Activated CD4-positive, alpha-beta T cell treated with anti-CD3 and anti-CD28 coated beads for 36 hours (primary cell): ENCODE measurements at regions of chr6 and their contacts with region 1.

Region 1: DNA sequence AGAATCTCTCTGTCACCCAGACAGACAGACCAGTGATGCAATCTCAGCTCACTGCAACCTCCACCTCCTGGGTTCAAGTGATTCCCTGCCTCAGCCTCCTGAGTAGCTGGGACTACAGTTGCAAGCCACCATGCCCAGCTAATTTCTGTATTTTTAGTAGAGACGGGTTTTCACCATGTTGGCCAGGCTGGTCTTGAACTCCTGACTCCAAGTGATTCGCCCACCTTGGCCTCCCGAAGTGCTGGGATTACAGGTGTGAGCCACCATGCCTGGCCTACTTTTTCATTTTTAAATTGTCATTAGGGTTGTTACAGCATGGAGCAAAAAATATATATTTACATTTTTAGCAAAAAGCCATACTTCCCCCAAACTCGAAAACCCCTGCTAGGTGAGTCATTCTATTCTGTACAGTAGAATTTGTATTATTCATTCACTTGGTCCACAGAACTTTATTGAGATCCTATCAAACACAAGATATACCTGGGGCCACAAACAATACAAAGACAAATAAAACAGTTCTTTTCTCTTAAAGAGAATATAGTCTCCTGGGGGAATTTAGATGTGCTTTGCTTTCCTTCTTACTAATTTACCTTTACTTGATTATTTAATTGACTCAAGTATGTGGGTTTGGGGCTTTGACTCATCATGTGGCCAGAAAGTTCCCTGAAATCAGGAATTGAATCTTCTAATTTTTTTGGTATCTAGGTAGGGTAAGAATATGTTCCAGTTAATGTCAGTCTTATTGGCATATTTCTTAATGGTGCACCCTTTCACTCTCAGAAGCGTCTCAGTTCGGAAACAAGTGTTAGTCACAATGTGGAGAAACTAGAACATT is 16.6 kb upstream of the CCND3 start:
- DNase-seq: peak; percentile 71
- ATAC-seq: peak; percentile 87
- H3K4me3 Mint-ChIP-seq: peak overlapping the region; percentile 32
- H3K27ac Mint-ChIP-seq: peak overlapping the region; percentile 97
- H3K4me1 Mint-ChIP-seq: peaks cover 83% of the 10 kb centered on the region
- H3K27me3 Mint-ChIP-seq: no peaks in the 10 kb centered on the region

Region 2: DNA sequence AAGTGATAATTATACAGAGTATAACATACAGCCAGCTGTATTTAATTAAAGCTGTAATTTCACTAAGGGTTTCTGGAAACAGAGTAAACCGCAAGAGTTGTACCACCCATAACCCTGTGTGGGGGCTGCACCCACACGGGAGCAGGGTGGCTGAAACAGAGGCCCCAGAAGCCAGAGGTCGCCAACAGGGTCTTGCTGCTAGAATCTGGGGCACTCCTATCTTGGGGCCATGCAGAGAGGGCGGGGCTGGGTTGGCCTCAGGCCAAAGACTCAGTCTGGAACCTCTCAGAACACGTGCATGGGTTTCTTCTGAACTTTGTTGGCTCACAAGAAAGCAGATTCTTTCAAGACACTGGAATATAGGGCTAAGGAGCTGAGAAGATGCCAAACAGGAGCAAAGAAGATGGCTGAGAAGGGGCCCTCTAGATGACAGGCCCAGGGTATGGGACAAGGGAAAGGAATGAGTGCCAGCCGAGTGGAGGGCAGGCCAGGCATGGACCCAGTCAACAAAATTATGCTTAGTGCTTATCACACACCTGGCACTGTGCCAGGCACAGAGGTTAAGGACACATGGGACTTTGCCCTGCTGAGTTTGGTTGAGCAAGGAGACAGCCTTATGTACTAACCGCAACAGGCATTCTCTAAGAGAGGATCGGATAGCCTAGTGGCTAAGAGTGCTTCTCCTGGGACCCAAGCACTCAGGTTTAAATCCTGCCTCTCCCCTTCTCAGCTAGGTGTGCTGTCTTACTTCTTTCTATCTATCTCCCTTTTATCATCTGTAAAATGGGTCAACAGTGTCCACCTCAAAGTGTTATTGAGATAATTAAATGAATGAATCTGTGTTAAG is 508.6 kb before region 1 on chr6:
- CTCF ChIA-PET with region 1: no interaction called
- POLR2A ChIA-PET with region 1: no interaction called
- intact Hi-C with region 1: no loop called
- DNase-seq: no peak
- ATAC-seq: no peak
- H3K4me3 Mint-ChIP-seq: no peak overlapping the region
- H3K27ac Mint-ChIP-seq: no peak overlapping the region
- H3K4me1 Mint-ChIP-seq: no peaks in the 10 kb centered on the region
- H3K27me3 Mint-ChIP-seq: no peaks in the 10 kb centered on the region

Region 3: GRCh38 chr6:41941280-41942066 is 16.8 kb before region 1 on chr6 and contains the start of gene CCND3:
- CTCF ChIA-PET with region 1: interaction called, 6 read pairs
- POLR2A ChIA-PET with region 1: interaction called, 4 read pairs
- intact Hi-C with region 1: loop called (anchors 1 kb)
- DNase-seq: peak; percentile 96
- ATAC-seq: peak; percentile 79
- H3K4me3 Mint-ChIP-seq: peak within 1 kb of the TSS; percentile 100
- H3K27ac Mint-ChIP-seq: peak within 1 kb of the TSS; percentile 96
- H3K4me1 Mint-ChIP-seq: peaks cover 63% of the 10 kb centered on the region
- H3K27me3 Mint-ChIP-seq: no peaks in the 10 kb centered on the region
- total RNA-seq, gene CCND3: 625 to 806 TPM

Region 4: GRCh38 chr6:41970436-41970846 is 12.2 kb after region 1 on chr6:
- CTCF ChIA-PET with region 1: interaction called, 3 read pairs
- POLR2A ChIA-PET with region 1: interaction called, 6 read pairs
- intact Hi-C with region 1: loop called (anchors 1 kb)
- DNase-seq: peak; percentile 84
- ATAC-seq: peak; percentile 85
- H3K4me3 Mint-ChIP-seq: peak overlapping the region; percentile 45
- H3K27ac Mint-ChIP-seq: peak overlapping the region; percentile 93
- H3K4me1 Mint-ChIP-seq: peaks cover 89% of the 10 kb centered on the region
- H3K27me3 Mint-ChIP-seq: no peaks in the 10 kb centered on the region

Region 5: GRCh38 chr6:41976794-41977484 is 18.7 kb after region 1 on chr6:
- CTCF ChIA-PET with region 1: interaction called, 11 read pairs
- POLR2A ChIA-PET with region 1: interaction called, 6 read pairs
- intact Hi-C with region 1: loop called in 1 of 2 experiments (anchors 2 kb)
- DNase-seq: peak; percentile 66
- ATAC-seq: peak; percentile 94
- H3K4me3 Mint-ChIP-seq: peak overlapping the region; percentile 71
- H3K27ac Mint-ChIP-seq: peak overlapping the region; percentile 99
- H3K4me1 Mint-ChIP-seq: peaks cover 78% of the 10 kb centered on the region
- H3K27me3 Mint-ChIP-seq: no peaks in the 10 kb centered on the region

Region 6: GRCh38 chr6:42017021-42017643 is 58.9 kb after region 1 on chr6:
- CTCF ChIA-PET with region 1: interaction called, 3 read pairs
- POLR2A ChIA-PET with region 1: no interaction called
- intact Hi-C with region 1: loop called (anchors 1 kb)
- DNase-seq: peak; percentile 72
- ATAC-seq: peak; percentile 68
- H3K4me3 Mint-ChIP-seq: peak overlapping the region; percentile 49
- H3K27ac Mint-ChIP-seq: peak overlapping the region; percentile 96
- H3K4me1 Mint-ChIP-seq: peaks cover 72% of the 10 kb centered on the region
- H3K27me3 Mint-ChIP-seq: no peaks in the 10 kb centered on the region

Region 7: DNA sequence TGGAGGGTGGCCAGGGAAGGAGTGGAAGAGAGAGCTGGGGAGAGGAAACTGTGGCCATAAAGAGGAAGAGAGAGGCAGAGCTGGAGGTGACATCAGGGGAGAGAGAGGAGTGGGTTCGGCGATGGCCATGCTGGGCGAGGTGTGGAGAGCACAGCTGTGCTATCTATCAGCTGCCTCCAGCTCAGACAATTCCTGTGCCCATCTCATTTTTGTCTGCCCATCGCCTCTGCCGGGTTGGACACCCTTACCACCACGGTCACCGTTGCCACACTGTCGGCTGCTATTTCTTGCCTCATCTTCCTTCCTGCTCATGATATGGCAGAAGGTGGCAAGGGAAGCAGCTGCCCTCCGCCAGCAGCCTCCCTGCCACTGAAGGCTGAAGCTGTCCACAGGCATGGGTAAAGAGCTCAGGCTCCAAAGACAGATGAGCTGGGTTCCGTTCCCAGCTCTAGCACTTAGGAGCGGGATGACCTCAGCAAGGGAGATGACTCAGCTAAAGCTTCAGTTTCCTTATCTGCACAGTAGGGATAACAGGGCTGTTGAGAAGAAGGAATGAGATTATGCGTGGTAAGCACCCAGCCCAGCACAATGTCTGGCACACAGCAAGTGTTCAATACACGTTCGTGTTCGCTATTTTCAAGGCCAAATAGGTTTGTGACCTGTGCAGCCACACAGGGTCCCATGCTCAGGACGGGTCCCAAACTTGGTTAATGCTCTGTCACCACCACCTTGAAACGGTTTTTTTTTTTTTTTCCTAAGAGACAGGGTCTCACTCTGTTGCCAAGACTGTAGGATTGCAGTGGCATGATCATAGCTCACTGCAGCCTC is 70.2 kb after region 1 on chr6:
- CTCF ChIA-PET with region 1: interaction called, 8 read pairs
- POLR2A ChIA-PET with region 1: no interaction called
- intact Hi-C with region 1: loop called in 1 of 2 experiments (anchors 1 kb)
- DNase-seq: peak; percentile 60
- ATAC-seq: peak; percentile 48
- H3K4me3 Mint-ChIP-seq: peak overlapping the region; percentile 74
- H3K27ac Mint-ChIP-seq: peak overlapping the region; percentile 99
- H3K4me1 Mint-ChIP-seq: peaks cover 94% of the 10 kb centered on the region
- H3K27me3 Mint-ChIP-seq: no peaks in the 10 kb centered on the region

Region 8: GRCh38 chr6:42142118-42142931 is 184.1 kb after region 1 on chr6 and contains the start of gene C6orf132:
- CTCF ChIA-PET with region 1: no interaction called
- POLR2A ChIA-PET with region 1: no interaction called
- intact Hi-C with region 1: no loop called
- DNase-seq: no peak
- ATAC-seq: no peak
- H3K4me3 Mint-ChIP-seq: peak within 1 kb of the TSS; percentile 2
- H3K27ac Mint-ChIP-seq: no peak within 1 kb of the TSS
- H3K4me1 Mint-ChIP-seq: peaks cover 4% of the 10 kb centered on the region
- H3K27me3 Mint-ChIP-seq: peaks cover 35% of the 10 kb centered on the region
- total RNA-seq, gene C6orf132: 0.14 TPM

Region 9: DNA sequence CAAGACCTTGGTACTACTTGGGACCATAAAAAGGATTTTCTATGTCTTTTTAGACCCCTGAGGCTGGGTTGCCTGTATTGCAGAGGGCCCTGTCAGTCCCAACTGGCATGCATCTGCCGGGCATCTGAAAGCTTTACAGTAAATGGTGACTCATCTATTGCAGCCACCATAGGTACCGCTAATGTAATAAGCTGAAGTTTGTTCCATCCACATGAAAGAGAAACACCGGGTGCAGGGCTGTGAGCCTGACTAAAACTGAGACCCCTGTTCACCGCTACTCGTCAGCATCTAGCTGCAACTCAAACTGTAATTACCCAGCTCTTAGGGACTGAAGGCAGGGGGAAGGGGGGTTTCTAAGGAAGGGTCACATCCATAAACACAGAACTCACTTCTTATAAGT is 443.9 kb after region 1 on chr6:
- CTCF ChIA-PET with region 1: no interaction called
- POLR2A ChIA-PET with region 1: no interaction called
- intact Hi-C with region 1: no loop called
- DNase-seq: peak; percentile 78
- ATAC-seq: peak; percentile 85
- H3K4me3 Mint-ChIP-seq: peak overlapping the region; percentile 18
- H3K27ac Mint-ChIP-seq: peak overlapping the region; percentile 69
- H3K4me1 Mint-ChIP-seq: peaks cover 83% of the 10 kb centered on the region
- H3K27me3 Mint-ChIP-seq: no peaks in the 10 kb centered on the region